ENCODE measurements at regions of chr4 and their contacts with region 1.

Region 1: DNA sequence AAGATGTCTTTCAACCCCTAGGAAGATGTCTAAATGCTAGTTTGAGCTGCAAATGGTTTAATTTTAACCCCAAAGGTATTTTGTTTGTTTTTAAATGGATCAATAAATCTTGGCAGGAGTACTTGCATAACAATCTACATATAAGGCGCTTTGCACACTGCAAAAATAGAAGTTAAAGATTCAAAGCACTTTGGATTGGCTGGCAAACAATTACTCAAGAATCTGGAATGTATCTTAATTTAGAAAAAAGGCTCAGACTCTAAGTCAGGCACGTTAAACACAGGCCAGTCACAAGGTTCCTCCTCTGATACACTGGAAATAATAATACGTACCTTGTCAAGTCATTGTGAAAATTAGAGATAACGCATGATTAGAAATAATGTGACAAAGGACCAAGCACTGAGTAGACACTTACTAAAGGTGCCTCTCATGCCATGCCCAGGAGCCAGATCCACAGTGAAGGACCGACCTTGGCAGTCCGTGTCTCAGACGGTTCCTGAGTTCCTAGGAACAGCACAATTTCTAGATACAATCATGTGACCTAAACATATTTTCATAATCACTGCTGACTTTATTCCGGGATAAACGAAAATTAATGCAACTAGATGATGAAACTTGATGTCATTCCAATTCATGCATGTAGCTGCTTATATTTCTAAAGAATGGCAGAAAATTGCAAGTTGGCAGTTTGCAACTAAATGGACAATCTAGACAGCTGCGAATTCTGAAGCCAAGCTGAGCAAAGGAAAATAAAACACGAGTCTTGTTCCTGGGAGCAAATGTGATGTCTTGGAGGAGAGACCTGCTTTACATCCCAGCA is 49.6 kb downstream of the PROM1 start:
- DNase-seq: peak; percentile 25
- H3K4me3 Mint-ChIP-seq: peak overlapping the region; percentile 45
- H3K27ac Mint-ChIP-seq: peak overlapping the region; percentile 92
- H3K4me1 Mint-ChIP-seq: peaks cover 10% of the 10 kb centered on the region
- H3K27me3 Mint-ChIP-seq: no peaks in the 10 kb centered on the region
- CTCF ChIP-seq: no peak

Region 2: DNA sequence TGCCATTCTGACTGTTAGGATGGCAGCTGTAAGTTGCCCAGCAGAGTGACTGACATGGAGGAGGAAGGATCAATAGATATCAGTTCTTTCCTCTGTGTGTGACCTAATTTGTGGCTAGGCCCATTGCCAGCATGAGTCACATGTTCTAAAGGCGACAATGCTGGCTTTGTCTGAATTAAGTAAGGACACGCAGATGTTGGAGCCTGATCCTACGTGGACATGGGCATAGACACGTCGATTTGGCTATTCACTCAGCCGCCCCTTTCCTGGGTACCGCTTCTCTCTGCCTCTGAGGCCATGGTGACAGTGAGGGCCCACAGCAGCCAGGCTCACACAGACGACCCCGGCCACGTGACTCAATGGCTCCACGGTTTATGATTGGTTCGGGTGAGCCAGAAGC is 33.3 kb after region 1 on chr4:
- CTCF ChIA-PET with region 1: no interaction called
- intact Hi-C with region 1: loop called (anchors 2 kb)
- DNase-seq: peak; percentile 77
- H3K4me3 Mint-ChIP-seq: peak overlapping the region; percentile 32
- H3K27ac Mint-ChIP-seq: peak overlapping the region; percentile 90
- H3K4me1 Mint-ChIP-seq: peaks cover 20% of the 10 kb centered on the region
- H3K27me3 Mint-ChIP-seq: no peaks in the 10 kb centered on the region
- CTCF ChIP-seq: no peak

Region 3: GRCh38 chr4:16082426-16083240 is 48.4 kb after region 1 on chr4:
- CTCF ChIA-PET with region 1: no interaction called
- intact Hi-C with region 1: loop called (anchors 1 kb)
- DNase-seq: peak; percentile 37
- H3K4me3 Mint-ChIP-seq: peak overlapping the region; percentile 82
- H3K27ac Mint-ChIP-seq: peak overlapping the region; percentile 50
- H3K4me1 Mint-ChIP-seq: peaks cover 6% of the 10 kb centered on the region
- H3K27me3 Mint-ChIP-seq: peaks cover 18% of the 10 kb centered on the region
- CTCF ChIP-seq: no peak

Region 4: GRCh38 chr4:16123356-16124084 is 89.3 kb after region 1 on chr4:
- CTCF ChIA-PET with region 1: no interaction called
- intact Hi-C with region 1: loop called (anchors 2 kb)
- DNase-seq: peak; percentile 70
- H3K4me3 Mint-ChIP-seq: no peak overlapping the region
- H3K27ac Mint-ChIP-seq: peak overlapping the region; percentile 57
- H3K4me1 Mint-ChIP-seq: peaks cover 18% of the 10 kb centered on the region
- H3K27me3 Mint-ChIP-seq: no peaks in the 10 kb centered on the region
- CTCF ChIP-seq: no peak

Region 5: DNA sequence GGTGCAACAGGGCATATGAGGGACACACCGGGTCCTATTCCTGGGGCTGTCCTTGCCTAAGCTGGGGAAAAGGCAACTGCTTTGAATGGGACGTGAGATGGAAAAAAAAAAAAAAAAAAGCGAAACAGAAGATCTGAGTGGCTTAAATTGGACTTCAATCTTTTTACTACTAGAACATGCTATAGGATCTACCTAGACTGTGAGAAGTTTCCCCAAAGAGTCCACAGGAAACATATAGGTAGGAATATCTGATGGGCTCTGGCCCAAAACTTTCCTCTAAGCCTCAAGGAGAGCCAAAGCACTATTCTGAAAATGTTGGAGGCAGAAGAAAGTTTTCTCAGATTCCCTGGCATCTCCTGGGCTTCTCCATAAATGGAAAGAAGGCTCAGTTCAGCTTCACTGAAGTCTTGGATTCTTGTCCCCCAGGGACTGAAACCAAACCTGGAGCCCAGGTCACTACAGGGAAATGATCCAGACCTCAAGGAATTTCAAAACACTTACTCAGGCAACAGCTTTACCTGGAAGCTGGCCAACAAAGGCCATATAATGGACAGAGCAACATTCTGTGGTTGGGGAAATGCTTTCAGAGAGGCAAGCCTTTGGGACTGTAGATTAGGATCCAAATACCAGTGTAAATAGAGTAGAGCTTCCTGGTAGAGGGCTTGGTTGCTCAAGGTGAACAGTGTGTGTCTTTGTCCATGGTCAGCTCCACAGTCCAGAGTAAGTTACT is 106.5 kb after region 1 on chr4:
- CTCF ChIA-PET with region 1: interaction called, 4 read pairs
- intact Hi-C with region 1: loop called (anchors 2 kb)
- DNase-seq: peak; percentile 80
- H3K4me3 Mint-ChIP-seq: no peak overlapping the region
- H3K27ac Mint-ChIP-seq: peak overlapping the region; percentile 88
- H3K4me1 Mint-ChIP-seq: peaks cover 28% of the 10 kb centered on the region
- H3K27me3 Mint-ChIP-seq: no peaks in the 10 kb centered on the region
- CTCF ChIP-seq: no peak

Measured in Calu3 (cell line).